Caco-2 (cell line): ENCODE measurements at regions of chr5 and their contacts with region 1.

Region 1: GRCh38 chr5:65102828-65103711 is 334.3 kb downstream of the CWC27 start:
- DNase-seq: peak; percentile 79 to 84
- H3K4me3 ChIP-seq: peak overlapping the region; percentile 57
- H3K4me3 Mint-ChIP-seq: peak overlapping the region; percentile 80
- H3K27ac Mint-ChIP-seq: peak overlapping the region; percentile 81
- H3K4me1 ChIP-seq: peaks cover 13% of the 10 kb centered on the region
- H3K4me1 Mint-ChIP-seq: peaks cover 24% of the 10 kb centered on the region
- H3K27me3 ChIP-seq: no peaks in the 10 kb centered on the region
- H3K27me3 Mint-ChIP-seq: no peaks in the 10 kb centered on the region
- CTCF ChIP-seq: peak; percentile 35 to 43

Region 2: DNA sequence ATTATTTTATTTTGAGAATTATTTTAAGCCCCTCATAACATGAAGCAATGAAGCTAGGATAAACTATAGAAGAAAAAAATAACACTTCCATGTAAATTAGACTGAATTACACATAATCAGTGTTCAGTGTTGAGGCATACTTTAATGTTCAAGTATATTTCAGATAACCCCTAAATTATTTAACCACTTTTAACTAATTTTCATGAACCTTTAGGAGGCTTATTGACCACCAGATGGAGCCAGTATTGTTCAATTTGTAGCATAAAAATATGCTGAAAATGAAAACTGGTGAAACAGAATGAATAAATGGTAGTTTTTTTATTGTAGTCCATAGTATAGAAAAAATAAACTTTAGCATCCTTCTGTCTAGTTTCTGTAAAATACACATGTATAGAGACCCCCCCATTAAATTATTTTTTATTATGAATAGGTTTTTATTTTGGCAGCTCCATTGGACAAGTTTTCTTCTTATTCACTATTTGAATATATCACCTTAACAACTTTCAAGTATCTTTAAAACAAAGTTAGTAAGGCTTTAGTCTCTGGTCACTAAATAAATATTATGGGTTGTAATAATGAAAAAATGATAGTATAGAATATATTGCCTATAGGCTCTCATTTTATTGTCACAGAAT is 144.2 kb before region 1 on chr5:
- CTCF ChIA-PET with region 1: no interaction called
- POLR2A ChIA-PET with region 1: no interaction called
- intact Hi-C with region 1: loop called (anchors 5 kb)
- DNase-seq: no peak
- H3K4me3 ChIP-seq: no peak overlapping the region
- H3K4me3 Mint-ChIP-seq: no peak overlapping the region
- H3K27ac Mint-ChIP-seq: no peak overlapping the region
- H3K4me1 ChIP-seq: peaks cover 19% of the 10 kb centered on the region
- H3K4me1 Mint-ChIP-seq: peaks cover 13% of the 10 kb centered on the region
- H3K27me3 ChIP-seq: no peaks in the 10 kb centered on the region
- H3K27me3 Mint-ChIP-seq: no peaks in the 10 kb centered on the region
- CTCF ChIP-seq: peak; percentile 40 to 48

Region 3: GRCh38 chr5:65151614-65152013 is 48.5 kb after region 1 on chr5:
- CTCF ChIA-PET with region 1: no interaction called
- POLR2A ChIA-PET with region 1: no interaction called
- intact Hi-C with region 1: loop called (anchors 5 kb)
- DNase-seq: no peak
- H3K4me3 ChIP-seq: no peak overlapping the region
- H3K4me3 Mint-ChIP-seq: no peak overlapping the region
- H3K27ac Mint-ChIP-seq: no peak overlapping the region
- H3K4me1 ChIP-seq: peaks cover 5% of the 10 kb centered on the region; the same call in 1 of the 2 replicates
- H3K4me1 Mint-ChIP-seq: no peaks in the 10 kb centered on the region
- H3K27me3 ChIP-seq: no peaks in the 10 kb centered on the region
- H3K27me3 Mint-ChIP-seq: no peaks in the 10 kb centered on the region
- CTCF ChIP-seq: no peak

Region 4: GRCh38 chr5:65190328-65191053 is 87.4 kb after region 1 on chr5:
- CTCF ChIA-PET with region 1: no interaction called
- POLR2A ChIA-PET with region 1: no interaction called
- intact Hi-C with region 1: no loop called
- DNase-seq: no peak
- H3K4me3 ChIP-seq: no peak overlapping the region
- H3K4me3 Mint-ChIP-seq: no peak overlapping the region
- H3K27ac Mint-ChIP-seq: no peak overlapping the region
- H3K4me1 ChIP-seq: peaks cover 2% of the 10 kb centered on the region
- H3K4me1 Mint-ChIP-seq: peaks cover 9% of the 10 kb centered on the region
- H3K27me3 ChIP-seq: no peaks in the 10 kb centered on the region
- H3K27me3 Mint-ChIP-seq: no peaks in the 10 kb centered on the region
- CTCF ChIP-seq: no peak

Region 5: GRCh38 chr5:65213921-65214525 is 111.0 kb after region 1 on chr5:
- CTCF ChIA-PET with region 1: no interaction called
- POLR2A ChIA-PET with region 1: no interaction called
- intact Hi-C with region 1: loop called (anchors 1 kb)
- DNase-seq: peak; percentile 56 to 61
- H3K4me3 ChIP-seq: no peak overlapping the region
- H3K4me3 Mint-ChIP-seq: no peak overlapping the region
- H3K27ac Mint-ChIP-seq: no peak overlapping the region
- H3K4me1 ChIP-seq: no peaks in the 10 kb centered on the region
- H3K4me1 Mint-ChIP-seq: no peaks in the 10 kb centered on the region
- H3K27me3 ChIP-seq: no peaks in the 10 kb centered on the region
- H3K27me3 Mint-ChIP-seq: peaks cover 3% of the 10 kb centered on the region
- CTCF ChIP-seq: peak; percentile 62 to 69

Region 6: GRCh38 chr5:65356282-65356681 is 253.2 kb after region 1 on chr5:
- CTCF ChIA-PET with region 1: no interaction called
- POLR2A ChIA-PET with region 1: no interaction called
- intact Hi-C with region 1: loop called (anchors 1 kb)
- DNase-seq: no peak
- H3K4me3 ChIP-seq: no peak overlapping the region
- H3K4me3 Mint-ChIP-seq: no peak overlapping the region
- H3K27ac Mint-ChIP-seq: no peak overlapping the region
- H3K4me1 ChIP-seq: no peaks in the 10 kb centered on the region
- H3K4me1 Mint-ChIP-seq: no peaks in the 10 kb centered on the region
- H3K27me3 ChIP-seq: no peaks in the 10 kb centered on the region
- H3K27me3 Mint-ChIP-seq: no peaks in the 10 kb centered on the region
- CTCF ChIP-seq: no peak

Region 7: DNA sequence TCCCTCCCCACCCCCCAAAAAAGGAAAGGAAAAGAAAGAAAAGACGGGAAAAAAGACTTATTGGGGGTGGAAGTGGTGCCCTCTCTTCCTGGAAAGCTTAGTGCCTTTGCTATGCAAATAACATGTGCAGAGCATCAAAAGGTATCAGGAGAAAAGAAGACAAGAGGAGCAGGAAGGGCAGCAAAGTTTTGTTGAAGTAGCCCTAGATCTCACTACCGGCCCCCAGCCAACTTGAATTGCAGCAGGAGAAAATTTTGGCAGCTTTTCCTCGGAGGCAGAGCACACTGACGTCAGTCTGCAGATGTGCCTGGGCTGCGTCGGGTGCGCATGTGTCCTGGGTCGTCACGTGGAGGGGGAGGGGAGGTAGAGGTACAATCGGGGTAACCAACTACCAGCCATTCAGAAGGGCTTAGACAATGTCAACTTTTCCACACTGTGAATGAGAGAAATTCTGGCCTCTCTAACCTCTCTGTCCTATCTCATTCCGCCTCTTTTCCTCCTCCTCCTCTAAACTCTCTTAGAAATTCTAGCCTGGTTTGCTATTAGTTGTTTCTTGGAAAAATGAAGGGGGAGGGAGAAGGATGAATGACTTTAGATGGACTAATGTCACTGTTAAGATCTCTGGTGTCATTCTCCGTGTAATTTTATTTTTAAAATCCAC is 378.7 kb after region 1 on chr5 and contains the start of gene ADAMTS6:
- CTCF ChIA-PET with region 1: interaction called, 3 read pairs
- POLR2A ChIA-PET with region 1: no interaction called
- intact Hi-C with region 1: loop called (anchors 1 kb)
- DNase-seq: peak; percentile 49 to 64
- H3K4me3 ChIP-seq: peak within 1 kb of the TSS; percentile 35
- H3K4me3 Mint-ChIP-seq: no peak within 1 kb of the TSS
- H3K27ac Mint-ChIP-seq: no peak within 1 kb of the TSS
- H3K4me1 ChIP-seq: peaks cover 5% of the 10 kb centered on the region
- H3K4me1 Mint-ChIP-seq: no peaks in the 10 kb centered on the region
- H3K27me3 ChIP-seq: no peaks in the 10 kb centered on the region
- H3K27me3 Mint-ChIP-seq: no peaks in the 10 kb centered on the region
- CTCF ChIP-seq: no peak
- total RNA-seq, gene ADAMTS6: 0.23 and 0.67 TPM in 2 replicates